Sciatic nerve (tissue), 2 donors: ENCODE measurements at regions of chr10 and their contacts with region 1.

Region 1: DNA sequence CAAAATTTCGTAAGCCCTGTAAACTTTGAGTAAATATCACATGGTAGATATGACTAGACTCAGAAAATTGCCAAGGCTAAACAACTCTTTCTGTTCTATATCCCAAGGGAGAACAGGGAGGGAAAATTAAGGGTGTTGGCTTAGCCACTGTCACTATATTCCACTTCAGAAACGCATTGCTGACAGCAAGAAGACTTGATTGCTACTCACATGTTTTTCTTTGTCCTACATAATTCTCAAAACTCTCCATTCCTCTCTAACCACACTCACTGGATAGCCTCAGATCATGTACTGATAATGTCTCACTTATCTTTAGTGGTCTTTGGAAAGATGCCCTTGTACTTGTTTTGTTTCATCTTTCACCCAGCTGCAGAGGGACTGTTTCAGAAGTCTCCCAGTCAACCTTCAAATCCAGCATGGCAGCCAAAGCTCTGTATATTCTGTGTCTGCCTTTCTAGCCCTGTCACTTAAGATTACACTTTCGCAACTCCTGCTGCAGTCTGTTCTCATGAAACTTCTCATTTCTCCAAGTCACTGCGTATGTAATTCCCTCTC is 582.4 kb upstream of the FZD8 start:
- DNase-seq: no peak
- ATAC-seq: no peak

Region 2: DNA sequence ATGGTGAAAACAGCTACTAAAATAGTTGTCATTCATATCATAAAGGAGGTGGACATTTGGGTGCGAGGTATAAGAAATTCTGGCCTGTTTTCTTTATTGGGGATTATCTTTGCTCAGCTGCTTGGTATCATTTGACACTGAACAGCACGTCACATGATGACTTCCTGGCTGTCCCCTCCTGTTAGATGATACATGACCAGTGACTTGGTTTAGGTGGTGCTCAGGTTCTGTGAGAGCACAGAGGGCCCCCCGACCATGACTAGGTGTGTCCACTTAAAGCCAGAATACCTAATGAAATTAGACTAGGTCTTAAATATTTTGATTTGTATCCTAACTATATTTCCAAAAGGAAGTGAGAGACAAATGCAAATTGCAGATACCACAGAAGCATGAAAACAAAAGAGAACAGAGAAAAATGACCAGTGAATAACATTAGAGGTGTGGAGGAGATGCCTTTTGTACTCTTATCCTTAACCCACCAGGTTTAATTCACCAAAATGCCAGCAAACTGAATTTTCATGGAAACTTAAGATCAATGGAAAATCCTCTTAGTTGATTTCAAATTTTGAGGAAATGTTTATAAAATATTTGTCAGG is 669.9 kb before region 1 on chr10:
- intact Hi-C with region 1: loop called (anchors 10 kb)
- DNase-seq: no peak
- ATAC-seq: no peak

Region 3: DNA sequence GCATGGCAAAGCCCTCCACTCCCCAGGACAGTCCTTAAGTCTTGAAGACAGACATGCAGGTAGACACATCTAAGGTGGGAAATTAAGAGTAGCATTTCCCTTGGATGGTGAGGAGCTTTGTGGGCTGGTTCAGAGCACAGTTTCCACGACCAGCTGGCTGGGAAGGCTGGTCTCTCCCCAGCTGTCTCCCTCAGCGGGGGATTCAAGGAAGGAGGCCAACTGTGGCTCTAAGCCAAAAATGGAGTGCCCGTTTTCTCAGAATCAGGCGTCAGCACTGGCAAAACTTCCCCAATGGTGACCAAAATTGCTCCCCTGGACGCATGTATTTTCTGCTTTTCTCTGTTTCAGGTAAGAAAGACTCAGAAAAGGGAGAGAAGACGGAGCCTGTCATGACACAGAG is 351.8 kb before region 1 on chr10:
- intact Hi-C with region 1: no loop called
- DNase-seq: no peak
- ATAC-seq: no peak

Region 4: GRCh38 chr10:37146443-37146842 is 921.9 kb after region 1 on chr10:
- intact Hi-C with region 1: no loop called
- DNase-seq: no peak
- ATAC-seq: no peak